Activated T-helper 1 cell treated with anti-CD3 and anti-CD28 coated beads, Interleukin-12 subunit alpha, Interleukin-12 subunit beta, Interleukin-2, Interleukin-4 antibody, amounts not matched to agents 30 ng/mL and 10 ng/mL and 1 ng/mL, durations not matched to agents 14 hours and 24 hours and 36 hours (primary cell): ENCODE measurements at regions of chr9 and their contacts with region 1.

Region 1: GRCh38 chr9:137188490-137189296 is at the starts of genes ANAPC2 and SSNA1:
- DNase-seq: peak; percentile 94
- H3K4me3 Mint-ChIP-seq: peak within 1 kb of the TSS; percentile 97
- H3K27ac Mint-ChIP-seq: peak within 1 kb of the TSS; percentile 87
- H3K4me1 Mint-ChIP-seq: peaks cover 24% of the 10 kb centered on the region
- H3K27me3 Mint-ChIP-seq: peaks cover 4% of the 10 kb centered on the region
- total RNA-seq, gene ANAPC2: 62.5 and 63.6 TPM in 2 replicates
- total RNA-seq, gene SSNA1: 101 and 105 TPM in 2 replicates

Region 2: DNA sequence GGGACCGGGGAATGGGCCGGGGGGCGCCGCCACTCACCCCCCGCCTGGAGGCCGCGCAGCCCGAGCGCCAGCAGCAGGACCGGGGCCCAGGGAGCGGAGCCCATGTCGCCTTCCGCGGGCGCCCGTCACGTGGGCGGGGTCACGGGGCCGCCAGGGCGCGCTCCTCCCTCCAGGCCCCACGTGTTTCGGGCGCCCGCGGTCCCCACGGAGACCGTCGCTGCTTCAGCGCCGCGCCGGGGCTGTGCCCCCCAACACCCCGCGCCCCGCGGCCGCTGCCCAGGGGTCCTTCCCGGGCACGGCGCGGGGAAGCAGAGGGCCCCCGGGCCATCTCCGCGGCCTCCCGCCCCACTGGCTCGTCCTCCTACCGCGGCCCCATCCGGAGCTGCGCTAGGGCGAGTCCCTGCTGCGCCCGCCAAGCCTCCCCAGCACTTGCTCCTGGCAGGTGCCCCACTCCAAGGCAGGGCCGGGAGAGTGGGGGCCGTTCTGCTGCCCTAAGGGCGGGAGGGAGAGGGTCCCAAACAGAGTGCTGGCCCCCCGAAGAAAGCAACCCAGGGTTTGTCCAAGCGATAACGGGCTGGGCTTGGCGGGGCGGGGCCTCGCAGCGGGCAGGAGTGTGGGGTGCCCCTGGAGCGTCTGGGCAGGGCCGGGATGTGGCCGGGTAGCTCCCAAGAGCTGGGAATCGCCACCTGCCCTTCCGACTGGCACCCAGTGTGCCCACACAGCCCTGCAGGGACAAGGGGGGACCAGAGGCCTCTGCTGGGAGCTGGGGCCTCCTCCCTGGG is 73.9 kb before region 1 on chr9 and contains the start of gene DPP7:
- intact Hi-C with region 1: loop called (anchors 1 kb)
- DNase-seq: peak; percentile 76
- H3K4me3 Mint-ChIP-seq: peak within 1 kb of the TSS; percentile 82
- H3K27ac Mint-ChIP-seq: peak within 1 kb of the TSS; percentile 52
- H3K4me1 Mint-ChIP-seq: peaks cover 11% of the 10 kb centered on the region
- H3K27me3 Mint-ChIP-seq: no peaks in the 10 kb centered on the region
- total RNA-seq, gene DPP7: 371 and 394 TPM in 2 replicates

Region 3: GRCh38 chr9:137129456-137130175 is 59.1 kb before region 1 on chr9:
- intact Hi-C with region 1: loop called (anchors 1 kb)
- DNase-seq: peak; percentile 91
- H3K4me3 Mint-ChIP-seq: peak overlapping the region; percentile 90
- H3K27ac Mint-ChIP-seq: peak overlapping the region; percentile 79
- H3K4me1 Mint-ChIP-seq: peaks cover 24% of the 10 kb centered on the region
- H3K27me3 Mint-ChIP-seq: peaks cover 5% of the 10 kb centered on the region

Region 4: GRCh38 chr9:137156567-137157375 is 31.9 kb before region 1 on chr9:
- intact Hi-C with region 1: loop called (anchors 2 kb)
- DNase-seq: peak; percentile 43
- H3K4me3 Mint-ChIP-seq: peak overlapping the region; percentile 21
- H3K27ac Mint-ChIP-seq: no peak overlapping the region
- H3K4me1 Mint-ChIP-seq: no peaks in the 10 kb centered on the region
- H3K27me3 Mint-ChIP-seq: peaks cover 26% of the 10 kb centered on the region

Region 5: GRCh38 chr9:137254624-137255447 is 66.1 kb after region 1 on chr9 and contains the start of gene NELFB:
- intact Hi-C with region 1: loop called (anchors 1 kb)
- DNase-seq: peak; percentile 97
- H3K4me3 Mint-ChIP-seq: peak within 1 kb of the TSS; percentile 90
- H3K27ac Mint-ChIP-seq: peak within 1 kb of the TSS; percentile 87
- H3K4me1 Mint-ChIP-seq: peaks cover 5% of the 10 kb centered on the region
- H3K27me3 Mint-ChIP-seq: peaks cover 2% of the 10 kb centered on the region
- total RNA-seq, gene NELFB: 70.8 and 72.1 TPM in 2 replicates